Tibial artery (tissue), 4 donors: ENCODE measurements at regions of chr11 and their contacts with region 1.

Region 1: DNA sequence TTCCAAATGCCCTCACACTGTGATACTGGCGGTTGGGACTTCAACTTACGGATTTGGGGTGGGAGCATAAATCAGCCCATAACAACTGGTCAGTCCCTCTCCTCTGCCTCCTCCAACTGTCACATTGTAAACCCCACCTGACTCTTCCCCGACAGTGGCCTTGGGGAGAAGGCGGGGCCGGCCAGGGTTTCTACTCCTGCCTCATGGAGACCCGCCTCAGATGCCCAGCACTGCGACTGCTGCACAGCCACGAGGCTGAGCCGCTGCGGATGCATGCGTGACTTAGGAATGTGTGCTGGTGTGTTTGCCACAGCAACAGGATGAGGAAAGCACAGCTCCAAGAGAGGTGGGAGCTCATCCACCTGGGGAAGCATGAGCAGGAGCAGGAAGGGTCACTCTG is 914.2 kb downstream of the NTM start:
- DNase-seq: no peak
- H3K4me3 ChIP-seq: no peak overlapping the region
- H3K27ac ChIP-seq: no peak overlapping the region
- H3K4me1 ChIP-seq: no peaks in the 10 kb centered on the region
- H3K27me3 ChIP-seq: no peaks in the 10 kb centered on the region
- CTCF ChIP-seq: no peak

Region 2: DNA sequence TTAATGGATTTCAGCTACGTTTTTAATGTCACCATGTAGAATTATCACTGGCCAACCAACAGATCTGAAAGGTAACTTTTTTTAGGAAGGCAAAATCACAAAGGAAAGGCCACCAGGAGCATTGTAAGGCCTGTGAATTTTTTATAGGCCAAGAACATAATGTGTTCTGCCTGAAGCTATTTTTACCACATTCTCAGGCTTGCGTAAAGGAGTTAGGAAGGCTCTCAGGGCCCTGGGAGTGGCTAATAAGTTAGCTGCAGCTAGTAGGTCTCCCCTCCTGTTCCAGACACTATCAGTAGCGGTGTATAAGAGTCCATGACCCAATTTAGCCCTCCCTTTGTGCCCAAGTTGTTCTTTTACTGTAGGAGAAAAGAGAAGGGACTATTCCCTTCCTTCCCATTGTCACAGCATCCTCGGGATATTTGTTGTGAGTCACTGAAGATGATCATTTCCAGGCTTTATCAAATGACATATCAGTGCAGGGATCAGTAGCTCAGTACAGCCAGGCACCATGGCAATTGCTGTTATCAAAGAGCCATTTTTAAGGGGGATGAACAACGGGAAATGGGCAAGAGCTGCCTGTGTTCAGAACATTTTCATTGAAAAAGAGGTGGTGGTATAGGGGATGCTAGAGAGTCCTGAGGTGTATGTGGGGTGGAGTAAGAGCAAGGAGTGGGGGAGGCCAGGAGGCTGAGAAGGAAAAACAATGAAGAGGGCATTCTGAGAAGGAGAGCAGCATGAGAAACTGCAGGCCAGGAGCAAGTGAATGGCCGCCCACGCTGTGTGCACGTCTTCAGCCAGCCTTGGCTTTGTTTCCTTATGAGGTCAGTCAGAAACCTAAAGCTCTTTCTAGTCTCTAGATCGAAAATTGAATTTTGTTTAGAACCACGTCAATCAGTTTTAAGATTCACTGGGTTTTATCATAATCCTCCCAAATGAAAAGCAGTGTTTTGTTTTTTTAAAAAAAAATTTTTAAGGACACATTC is 26.1 kb after region 1 on chr11:
- intact Hi-C with region 1: loop called (anchors 2 kb)
- DNase-seq: no peak
- H3K4me3 ChIP-seq: no peak overlapping the region
- H3K27ac ChIP-seq: no peak overlapping the region
- H3K4me1 ChIP-seq: no peaks in the 10 kb centered on the region
- H3K27me3 ChIP-seq: no peaks in the 10 kb centered on the region
- CTCF ChIP-seq: no peak